PC-9 (cell line): ENCODE measurements at regions of chr19 and their contacts with region 1.

Region 1: DNA sequence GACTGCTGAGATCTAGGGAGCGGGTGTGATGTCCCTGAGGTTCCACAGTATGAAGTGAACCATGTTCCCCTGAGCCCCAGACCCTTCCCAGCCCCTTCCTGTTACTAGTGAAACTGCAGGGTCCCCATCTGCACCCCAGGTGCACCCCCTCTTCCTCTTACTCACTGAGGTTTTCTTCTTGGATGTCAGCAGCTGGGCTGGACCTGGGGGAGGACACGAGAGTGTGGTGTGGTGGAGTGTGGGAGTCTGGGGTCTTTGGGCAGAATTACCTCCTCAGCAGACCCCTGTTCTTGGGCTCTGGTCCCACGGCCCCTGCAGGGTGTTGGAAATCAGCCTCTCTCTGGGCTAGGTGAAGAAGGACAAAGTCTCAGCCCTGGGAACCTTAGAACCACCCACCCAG is 3.3 kb upstream of the LILRA6 start:
- DNase-seq: no peak
- H3K4me3 ChIP-seq: no peak overlapping the region
- H3K27ac ChIP-seq: no peak overlapping the region
- H3K4me1 ChIP-seq: no peaks in the 10 kb centered on the region
- H3K27me3 ChIP-seq: peaks cover 86% of the 10 kb centered on the region
- CTCF ChIP-seq: no peak

Region 2: DNA sequence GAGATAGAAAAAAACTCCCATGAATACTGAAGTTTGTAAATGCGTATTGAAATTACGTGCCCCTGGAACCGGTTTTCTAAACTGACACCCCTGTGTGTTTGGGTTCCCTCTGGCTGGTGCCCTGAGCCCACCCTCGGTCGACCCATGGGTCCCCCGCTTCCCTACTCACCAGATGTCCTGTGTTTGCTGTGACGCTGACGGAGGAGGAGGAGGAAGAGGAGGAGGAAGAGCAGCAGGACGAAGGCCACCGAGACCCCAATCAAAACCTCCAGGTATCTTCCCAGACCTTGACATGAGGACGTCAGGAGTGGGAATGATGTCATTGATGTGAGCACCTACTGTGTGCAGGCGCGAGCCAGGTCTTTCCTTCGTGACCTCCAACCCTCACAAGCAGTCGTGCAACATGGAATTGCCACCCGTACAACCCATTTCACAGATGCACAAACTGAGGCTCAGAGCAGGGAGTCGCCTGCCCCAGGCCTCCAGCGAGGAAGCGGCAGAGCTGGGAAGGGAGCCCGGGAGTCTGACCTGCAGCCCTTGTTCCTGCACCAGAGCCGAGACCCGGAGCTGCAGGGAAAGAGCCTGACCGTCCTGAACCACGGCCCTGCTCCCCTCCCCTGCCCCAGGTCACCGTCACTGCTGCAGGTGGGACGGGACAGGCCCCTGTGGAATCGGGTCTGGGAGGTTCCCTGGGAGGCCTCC is 26.8 kb before region 1 on chr19:
- CTCF ChIA-PET with region 1: no interaction called
- POLR2A ChIA-PET with region 1: no interaction called
- intact Hi-C with region 1: loop called (anchors 2 kb)
- DNase-seq: no peak
- H3K4me3 ChIP-seq: no peak overlapping the region
- H3K27ac ChIP-seq: no peak overlapping the region
- H3K4me1 ChIP-seq: no peaks in the 10 kb centered on the region
- H3K27me3 ChIP-seq: peaks cover 11% of the 10 kb centered on the region; the same call in 1 of the 2 replicates
- CTCF ChIP-seq: no peak

Region 3: GRCh38 chr19:54230031-54230430 is 15.9 kb before region 1 on chr19:
- CTCF ChIA-PET with region 1: no interaction called
- POLR2A ChIA-PET with region 1: no interaction called
- intact Hi-C with region 1: no loop called
- DNase-seq: no peak
- H3K4me3 ChIP-seq: no peak overlapping the region
- H3K27ac ChIP-seq: no peak overlapping the region
- H3K4me1 ChIP-seq: no peaks in the 10 kb centered on the region
- H3K27me3 ChIP-seq: peaks cover 48% of the 10 kb centered on the region
- CTCF ChIP-seq: no peak